ENCODE measurements at regions of chr1 and their contacts with region 1.

Region 1: DNA sequence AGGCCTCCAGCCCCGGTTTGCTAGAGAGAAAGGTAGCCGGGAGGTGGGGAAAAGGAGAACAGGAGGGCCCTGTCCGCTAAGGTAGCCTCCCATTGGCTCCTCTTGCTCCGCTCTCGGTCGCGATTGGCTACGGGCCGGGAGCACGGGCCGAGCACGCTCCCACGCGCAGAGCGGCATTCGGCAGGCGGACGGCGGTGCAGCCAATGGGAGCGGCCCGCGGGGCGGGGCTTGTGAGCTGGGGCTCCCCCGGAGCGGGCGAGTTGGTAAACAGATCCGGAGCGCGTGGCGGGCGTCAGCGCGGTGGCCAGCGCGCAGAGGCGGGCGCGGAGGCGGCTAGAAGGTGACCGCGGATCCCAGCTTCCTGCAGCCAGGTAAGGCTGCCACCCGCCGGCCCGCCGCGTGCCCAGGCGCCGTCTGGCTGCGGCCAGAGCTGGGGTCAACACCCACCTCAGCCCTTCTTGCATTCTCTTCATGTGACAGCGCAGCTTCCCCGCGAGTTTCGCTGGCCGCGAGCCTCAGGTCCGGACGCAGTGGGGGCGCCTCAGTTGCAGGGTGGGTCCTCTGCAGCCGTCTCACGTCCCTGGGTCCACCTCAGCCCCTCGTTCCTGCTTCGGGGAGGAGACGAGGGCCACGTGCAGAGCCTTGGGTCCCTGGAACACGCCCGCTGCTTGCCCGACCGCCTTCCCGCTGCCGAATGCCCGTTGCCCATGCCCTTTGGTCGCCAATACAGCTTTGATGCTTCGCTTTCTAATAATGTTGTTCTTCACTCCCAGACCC is at the start of gene COQ8A:
- DNase-seq: peak in 8 of 9 donors; percentile 99 to 100 (median 100)
- ATAC-seq: peak; percentile 95
- H3K4me3 ChIP-seq: peak within 1 kb of the TSS; percentile 84
- H3K4me3 Mint-ChIP-seq: peak within 1 kb of the TSS; percentile 85 to 94 (median 92)
- H3K27ac ChIP-seq: peak within 1 kb of the TSS; percentile 87
- H3K27ac Mint-ChIP-seq: peak within 1 kb of the TSS; percentile 94 to 98 (median 97)
- H3K4me1 ChIP-seq: peaks cover 15 to 34% of the 10 kb centered on the region in 2 donors
- H3K4me1 Mint-ChIP-seq: peaks cover 43 to 67% (median 50%) of the 10 kb centered on the region in 7 donors
- H3K27me3 ChIP-seq: no peaks in the 10 kb centered on the region
- H3K27me3 Mint-ChIP-seq: no peaks in the 10 kb centered on the region
- total RNA-seq, gene COQ8A: 34.1 to 83.4 (median 67.8) TPM

Region 2: DNA sequence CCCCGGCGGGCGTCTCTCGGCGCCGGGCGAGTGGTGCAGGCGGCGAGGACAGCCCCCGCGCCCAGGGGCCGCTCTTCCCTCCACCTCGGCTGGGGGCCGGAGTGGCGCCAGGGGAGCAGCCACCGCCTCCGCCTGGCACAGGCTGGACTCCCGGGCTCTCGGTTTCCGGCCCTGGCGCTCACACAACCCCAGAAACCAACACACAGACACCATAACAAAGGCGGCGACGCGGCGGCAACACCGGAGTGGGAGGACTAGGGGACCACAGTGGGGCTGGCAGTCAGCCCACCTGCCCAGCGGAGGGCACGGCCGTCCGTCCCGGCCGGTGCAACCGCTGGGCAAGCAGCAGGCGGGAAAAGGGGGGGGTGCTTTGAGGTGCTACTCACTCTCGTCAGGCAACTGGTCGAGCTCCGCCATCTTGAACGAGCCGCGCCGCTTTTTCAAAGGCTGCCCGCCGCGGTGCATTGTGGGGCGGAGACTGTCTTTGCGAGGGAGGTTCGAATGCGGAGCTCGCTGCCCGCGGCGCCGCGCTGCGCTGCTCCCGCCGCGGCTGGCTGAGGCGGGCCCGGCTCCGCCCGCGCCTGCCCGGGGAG is 631.4 kb before region 1 on chr1 and contains the start of gene LIN9:
- CTCF ChIA-PET with region 1: no interaction called
- POLR2A ChIA-PET with region 1: no interaction called
- intact Hi-C with region 1: loop called in 1 of 2 experiments (anchors 1 kb)
- DNase-seq: peak; percentile 83 to 94 (median 88)
- ATAC-seq: peak; percentile 97
- H3K4me3 ChIP-seq: peak within 1 kb of the TSS; percentile 99
- H3K4me3 Mint-ChIP-seq: peak within 1 kb of the TSS; percentile 88 to 95 (median 92)
- H3K27ac ChIP-seq: peak within 1 kb of the TSS; percentile 76
- H3K27ac Mint-ChIP-seq: peak within 1 kb of the TSS; percentile 34 to 97 (median 85)
- H3K4me1 ChIP-seq: peaks cover 5% of the 10 kb centered on the region in 2 donors
- H3K4me1 Mint-ChIP-seq: peaks cover 14 to 37% (median 22%) of the 10 kb centered on the region in 7 donors
- H3K27me3 ChIP-seq: peaks cover 0 to 4% of the 10 kb centered on the region in 2 donors
- H3K27me3 Mint-ChIP-seq: peaks cover 5 to 19% (median 14%) of the 10 kb centered on the region in 5 donors
- total RNA-seq, gene LIN9: 2.0 to 8.0 (median 5.0) TPM

Region 3: DNA sequence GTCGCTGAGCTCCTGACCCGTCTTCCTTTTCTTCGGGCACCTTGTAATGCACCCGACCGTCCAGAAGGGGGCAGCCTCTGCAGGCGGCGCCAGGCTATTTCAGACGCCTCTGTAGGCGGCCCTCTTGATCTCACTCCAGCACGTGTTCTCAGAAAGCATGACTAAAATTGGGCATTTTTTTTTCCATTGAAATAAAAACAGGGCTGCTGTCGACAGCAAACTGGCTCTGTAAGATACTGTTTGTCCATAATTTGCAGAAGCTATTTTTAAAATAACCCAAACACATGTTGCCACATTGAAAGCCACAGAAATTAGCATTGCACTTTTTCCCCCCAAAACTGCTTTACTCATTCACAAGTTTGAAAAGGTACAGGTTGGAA is 313.6 kb before region 1 on chr1:
- CTCF ChIA-PET with region 1: interaction called, 3 read pairs
- POLR2A ChIA-PET with region 1: interaction called, 4 read pairs
- intact Hi-C with region 1: loop called (anchors 2 kb)
- DNase-seq: peak; percentile 62 to 85 (median 76)
- ATAC-seq: peak; percentile 97
- H3K4me3 ChIP-seq: peak overlapping the region; percentile 25
- H3K4me3 Mint-ChIP-seq: peak overlapping the region; percentile 29 to 72 (median 56)
- H3K27ac ChIP-seq: no peak overlapping the region
- H3K27ac Mint-ChIP-seq: peak overlapping the region in 7 of 9 donors; percentile 43 to 85 (median 67)
- H3K4me1 ChIP-seq: peaks cover 8 to 10% of the 10 kb centered on the region in 2 donors
- H3K4me1 Mint-ChIP-seq: peaks cover 9 to 33% (median 27%) of the 10 kb centered on the region in 7 donors
- H3K27me3 ChIP-seq: no peaks in the 10 kb centered on the region
- H3K27me3 Mint-ChIP-seq: peaks cover 0 to 8% (median 0%) of the 10 kb centered on the region in 5 donors

Region 4: GRCh38 chr1:226882631-226883409 is 57.4 kb before region 1 on chr1:
- CTCF ChIA-PET with region 1: interaction called, 4 read pairs
- POLR2A ChIA-PET with region 1: interaction called, 46 read pairs
- intact Hi-C with region 1: loop called (anchors 1 kb)
- DNase-seq: peak in 8 of 9 donors; percentile 31 to 65 (median 52)
- ATAC-seq: peak; percentile 79
- H3K4me3 ChIP-seq: peak overlapping the region; percentile 48
- H3K4me3 Mint-ChIP-seq: peak overlapping the region; percentile 65 to 88 (median 80)
- H3K27ac ChIP-seq: peak overlapping the region; percentile 73
- H3K27ac Mint-ChIP-seq: peak overlapping the region; percentile 85 to 98 (median 91)
- H3K4me1 ChIP-seq: peaks cover 4 to 34% of the 10 kb centered on the region in 2 donors
- H3K4me1 Mint-ChIP-seq: peaks cover 44 to 57% (median 51%) of the 10 kb centered on the region in 7 donors
- H3K27me3 ChIP-seq: no peaks in the 10 kb centered on the region
- H3K27me3 Mint-ChIP-seq: no peaks in the 10 kb centered on the region

Region 5: GRCh38 chr1:226990133-226990716 is 50.0 kb after region 1 on chr1:
- CTCF ChIA-PET with region 1: no interaction called
- POLR2A ChIA-PET with region 1: interaction called, 3 read pairs
- intact Hi-C with region 1: loop called (anchors 2 to 5 kb)
- DNase-seq: peak in 4 of 9 donors; percentile 8 to 16 (median 12)
- ATAC-seq: peak; percentile 84
- H3K4me3 ChIP-seq: no peak overlapping the region
- H3K4me3 Mint-ChIP-seq: peak overlapping the region in 6 of 10 donors; percentile 12 to 65 (median 40)
- H3K27ac ChIP-seq: no peak overlapping the region
- H3K27ac Mint-ChIP-seq: peak overlapping the region in 8 of 9 donors; percentile 5 to 86 (median 76)
- H3K4me1 ChIP-seq: peaks cover 0 to 4% of the 10 kb centered on the region in 2 donors
- H3K4me1 Mint-ChIP-seq: peaks cover 12 to 28% (median 16%) of the 10 kb centered on the region in 7 donors
- H3K27me3 ChIP-seq: no peaks in the 10 kb centered on the region
- H3K27me3 Mint-ChIP-seq: no peaks in the 10 kb centered on the region

Region 6: GRCh38 chr1:227102056-227102455 is 161.8 kb after region 1 on chr1:
- CTCF ChIA-PET with region 1: no interaction called
- POLR2A ChIA-PET with region 1: no interaction called
- intact Hi-C with region 1: no loop called
- DNase-seq: no peak
- ATAC-seq: no peak
- H3K4me3 ChIP-seq: no peak overlapping the region
- H3K4me3 Mint-ChIP-seq: no peak overlapping the region
- H3K27ac ChIP-seq: no peak overlapping the region
- H3K27ac Mint-ChIP-seq: no peak overlapping the region
- H3K4me1 ChIP-seq: no peaks in the 10 kb centered on the region
- H3K4me1 Mint-ChIP-seq: no peaks in the 10 kb centered on the region
- H3K27me3 ChIP-seq: no peaks in the 10 kb centered on the region
- H3K27me3 Mint-ChIP-seq: peaks cover 8 to 22% (median 12%) of the 10 kb centered on the region in 5 donors

Region 7: DNA sequence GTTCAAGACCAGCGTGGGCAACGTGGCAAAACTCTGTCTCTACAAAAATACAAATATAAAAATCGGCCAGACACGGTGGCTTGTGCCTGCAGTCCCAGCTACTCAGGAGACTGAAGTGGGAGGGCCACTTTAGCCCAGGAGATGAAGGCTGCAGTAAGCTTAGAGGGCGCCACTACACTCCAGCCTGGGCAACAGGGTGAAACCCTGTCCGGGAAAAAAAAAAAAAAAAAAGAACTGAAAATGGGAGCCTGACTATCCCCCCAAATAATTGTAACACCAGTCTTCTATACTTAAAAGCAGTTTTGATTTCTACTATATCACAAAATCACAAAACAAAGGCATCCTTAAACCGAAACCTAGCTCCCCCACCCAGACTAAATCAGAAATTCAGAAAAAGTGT is 317.7 kb after region 1 on chr1:
- CTCF ChIA-PET with region 1: no interaction called
- POLR2A ChIA-PET with region 1: no interaction called
- intact Hi-C with region 1: no loop called
- DNase-seq: no peak
- ATAC-seq: no peak
- H3K4me3 ChIP-seq: no peak overlapping the region
- H3K4me3 Mint-ChIP-seq: no peak overlapping the region
- H3K27ac ChIP-seq: no peak overlapping the region
- H3K27ac Mint-ChIP-seq: no peak overlapping the region
- H3K4me1 ChIP-seq: no peaks in the 10 kb centered on the region
- H3K4me1 Mint-ChIP-seq: no peaks in the 10 kb centered on the region
- H3K27me3 ChIP-seq: no peaks in the 10 kb centered on the region
- H3K27me3 Mint-ChIP-seq: peaks cover 0 to 9% (median 2%) of the 10 kb centered on the region in 5 donors

Region 8: DNA sequence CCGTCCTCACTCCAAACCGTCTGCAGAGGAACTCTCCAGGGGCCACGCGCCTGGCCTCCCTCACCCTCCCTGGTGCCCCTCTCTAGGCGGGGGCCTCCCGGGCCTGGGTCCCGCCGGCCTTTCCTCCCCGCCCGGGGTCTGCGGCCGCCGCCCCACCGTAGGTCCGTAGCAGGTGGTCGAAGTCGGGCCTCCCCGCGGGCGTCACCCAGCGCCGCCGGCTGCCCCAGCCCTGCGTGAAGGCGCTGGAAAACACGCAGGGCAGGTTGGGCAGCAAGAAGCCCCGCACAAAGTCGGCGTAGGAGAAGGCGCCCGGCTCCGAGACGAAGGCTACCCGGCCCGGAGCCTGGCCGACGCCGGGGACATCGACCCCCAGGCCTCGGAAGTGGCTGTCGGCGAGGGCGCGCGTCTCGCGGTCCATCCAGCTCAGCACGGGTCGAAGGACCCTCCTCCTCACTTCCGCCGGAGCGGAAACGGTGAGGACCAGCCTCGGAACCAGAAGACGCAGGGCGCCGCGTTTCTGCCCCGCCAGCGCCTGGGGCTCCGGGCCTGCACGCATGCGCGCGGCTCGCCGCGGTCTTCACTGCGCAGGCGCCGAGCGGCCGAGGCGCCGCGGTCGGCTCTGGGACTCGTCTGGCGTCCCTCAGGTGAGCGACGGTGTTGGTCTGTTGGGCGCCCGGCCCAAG is 794.8 kb after region 1 on chr1 and contains the starts of genes JMJD4 and SNAP47:
- CTCF ChIA-PET with region 1: no interaction called
- POLR2A ChIA-PET with region 1: no interaction called
- intact Hi-C with region 1: loop called in 1 of 2 experiments (anchors 10 kb)
- DNase-seq: peak; percentile 85 to 98 (median 93)
- ATAC-seq: peak; percentile 94
- H3K4me3 ChIP-seq: peak within 1 kb of the TSS; percentile 72
- H3K4me3 Mint-ChIP-seq: peak within 1 kb of the TSS; percentile 87 to 97 (median 90)
- H3K27ac ChIP-seq: peak within 1 kb of the TSS; percentile 87
- H3K27ac Mint-ChIP-seq: peak within 1 kb of the TSS; percentile 62 to 96 (median 89)
- H3K4me1 ChIP-seq: peaks cover 3 to 16% of the 10 kb centered on the region in 2 donors
- H3K4me1 Mint-ChIP-seq: peaks cover 28 to 59% (median 40%) of the 10 kb centered on the region in 7 donors
- H3K27me3 ChIP-seq: no peaks in the 10 kb centered on the region
- H3K27me3 Mint-ChIP-seq: no peaks in the 10 kb centered on the region
- total RNA-seq, gene JMJD4: 12.1 to 36.8 (median 26.3) TPM
- total RNA-seq, gene SNAP47: 18.5 to 31.8 (median 27.8) TPM